Posterior cingulate gyrus (tissue), 11 donors: ENCODE measurements at regions of chr17 and their contacts with region 1.

Region 1: GRCh38 chr17:59331129-59331928 is at the start of gene YPEL2:
- DNase-seq: peak; percentile 95 to 100 (median 98)

Region 2: GRCh38 chr17:59277031-59277430 is 54.3 kb before region 1 on chr17:
- intact Hi-C with region 1: no loop called
- DNase-seq: no peak

Region 3: DNA sequence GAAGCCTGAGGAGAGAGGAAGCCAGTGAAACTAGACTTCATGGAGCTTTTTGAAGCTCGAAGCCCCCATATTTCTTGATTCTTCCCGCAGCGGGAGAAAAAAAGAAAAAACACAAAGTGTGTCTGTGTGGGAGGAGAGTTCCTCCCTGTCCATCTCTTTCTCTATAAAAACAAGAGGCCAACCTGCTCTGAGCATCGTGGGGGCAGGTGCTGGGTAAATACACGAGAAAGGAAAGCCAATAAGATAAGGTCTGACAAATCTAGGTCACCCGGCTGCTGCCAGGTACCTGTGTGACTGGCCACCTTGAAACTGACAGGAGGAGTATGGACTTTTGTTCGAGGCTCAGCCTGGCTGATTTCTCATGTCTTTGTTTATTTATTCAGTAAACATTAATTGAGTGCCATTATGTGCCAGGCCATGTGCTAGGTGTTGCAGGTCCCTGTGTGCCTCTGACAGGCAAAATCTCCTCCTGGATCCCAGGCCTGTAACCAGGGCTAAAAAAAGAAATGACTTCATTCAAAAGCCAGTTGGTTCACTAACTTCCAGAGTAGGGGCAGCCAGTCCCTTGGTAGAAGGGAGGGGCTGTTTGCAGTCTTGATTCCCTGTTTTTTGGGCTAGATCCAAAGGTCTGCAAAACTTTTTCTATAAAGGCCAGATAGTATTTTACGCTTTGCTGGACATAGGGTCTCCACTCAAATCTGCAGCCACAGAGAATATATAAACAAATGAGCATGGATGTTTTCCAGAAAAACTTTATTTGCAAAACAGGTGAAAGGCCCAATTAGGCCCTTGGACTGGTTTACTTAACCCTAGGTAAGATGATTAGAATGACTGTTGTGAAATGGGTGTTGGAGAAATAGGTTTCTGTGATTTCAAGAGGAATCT is 35.7 kb after region 1 on chr17:
- intact Hi-C with region 1: loop called (anchors 5 kb)
- DNase-seq: no peak

Region 4: GRCh38 chr17:59406808-59407429 is 75.6 kb after region 1 on chr17:
- intact Hi-C with region 1: no loop called
- DNase-seq: peak in 1 of 10 donors; percentile 59